Motor neuron (in vitro differentiated cells): ENCODE measurements at regions of chr15 and their contacts with region 1.

Region 1: DNA sequence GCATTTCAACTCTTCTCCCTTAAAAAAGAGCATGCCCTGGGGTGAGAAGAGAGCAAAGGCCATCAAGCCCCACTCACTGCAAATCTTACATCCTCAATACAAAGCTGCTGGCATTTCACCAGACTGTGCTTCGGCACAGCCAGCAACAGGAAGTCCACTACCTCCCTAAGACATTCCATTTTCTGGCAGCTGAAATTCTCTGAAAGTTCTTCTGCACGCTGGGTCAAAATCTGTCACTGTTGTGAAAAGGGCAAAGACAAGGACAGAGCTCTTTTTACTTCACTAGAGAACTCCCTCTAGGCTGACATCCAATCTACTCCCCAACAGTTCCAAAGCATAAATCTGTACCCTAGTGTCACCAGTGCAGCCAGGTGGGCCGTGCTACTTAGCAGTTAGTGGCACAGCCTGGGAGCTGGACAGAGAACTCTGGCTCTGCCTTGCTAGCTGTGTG is 6.3 kb downstream of the MTMR10 start:
- ATAC-seq: peak in 4 of 8 experiments; percentile 17 to 36 (median 26)
- H3K4me3 ChIP-seq: no peak overlapping the region
- H3K27ac ChIP-seq: no peak overlapping the region
- H3K4me1 ChIP-seq: peaks cover 16 to 23% of the 10 kb centered on the region in 2 donors

Region 2: DNA sequence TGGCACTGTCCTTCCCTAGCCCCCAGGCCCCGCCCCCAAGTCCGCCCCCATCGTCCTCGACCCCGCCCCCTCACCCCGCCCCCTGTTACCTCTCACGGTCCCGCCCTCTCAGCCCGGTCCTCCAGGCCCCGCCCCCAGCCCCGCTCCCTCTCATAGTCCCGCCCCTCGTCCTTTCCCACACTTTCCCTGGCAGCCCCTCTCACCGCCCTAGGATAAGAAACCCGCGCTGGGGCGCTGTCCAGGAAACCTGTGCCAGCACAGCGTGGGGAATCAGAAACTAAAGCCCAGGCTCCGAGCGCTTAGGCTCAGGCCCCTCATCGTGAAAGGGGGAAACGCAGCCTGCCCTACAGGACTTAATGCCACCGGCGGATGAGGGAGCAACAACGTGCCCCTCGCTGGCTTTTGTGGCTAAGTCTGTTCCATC is 95.5 kb after region 1 on chr15:
- in situ Hi-C with region 1: no loop called
- ATAC-seq: peak in 6 of 8 experiments; percentile 6 to 78 (median 63)
- H3K4me3 ChIP-seq: no peak overlapping the region
- H3K27ac ChIP-seq: no peak overlapping the region
- H3K4me1 ChIP-seq: peaks cover 30 to 31% of the 10 kb centered on the region in 2 donors

Region 3: GRCh38 chr15:31136016-31136415 is 150.9 kb after region 1 on chr15:
- in situ Hi-C with region 1: loop called in 1 of 9 experiments (anchors 10 kb)
- ATAC-seq: peak in 3 of 8 experiments; percentile 18 to 58 (median 26)
- H3K4me3 ChIP-seq: no peak overlapping the region
- H3K27ac ChIP-seq: no peak overlapping the region
- H3K4me1 ChIP-seq: peaks cover 0 to 17% of the 10 kb centered on the region in 2 donors